ENCODE measurements at regions of chr1 and their contacts with region 1.

Region 1: DNA sequence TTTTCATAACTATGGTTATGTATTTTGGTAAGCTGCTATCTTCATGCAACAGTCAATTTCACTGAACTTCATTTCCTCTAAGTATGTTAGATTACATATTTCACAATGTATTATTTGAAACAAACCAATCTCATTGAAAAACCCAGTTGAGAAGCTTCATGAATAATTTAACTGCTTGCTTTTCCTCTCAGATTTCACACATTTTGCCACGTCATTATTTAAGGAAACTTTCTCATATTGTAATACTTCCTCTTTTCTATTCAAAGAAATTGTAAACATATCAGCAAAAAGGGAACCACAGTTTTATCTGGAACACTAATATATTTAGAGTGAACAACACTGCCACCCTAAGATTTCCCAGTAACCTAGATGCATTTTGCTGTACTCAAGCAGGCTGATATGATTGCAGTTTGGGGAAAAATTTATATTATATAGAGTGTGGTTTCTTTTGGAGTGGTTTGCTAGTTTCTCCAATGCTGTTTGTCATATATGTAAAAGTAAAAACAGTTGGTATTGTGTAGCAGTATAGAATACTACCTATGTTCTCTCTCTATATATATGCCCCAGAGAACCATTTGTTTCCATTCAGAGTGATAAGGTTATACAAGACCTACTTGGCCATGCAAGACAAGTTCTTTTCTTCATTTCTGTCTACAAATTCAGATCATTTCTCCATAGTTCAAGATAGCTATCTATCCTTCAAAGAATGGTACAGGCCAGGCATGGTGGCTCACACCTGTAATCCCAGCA is 28.4 kb upstream of the AHCTF1 start:
- H3K4me3 Mint-ChIP-seq: peak overlapping the region; percentile 70
- H3K27ac Mint-ChIP-seq: peak overlapping the region; percentile 94
- H3K4me1 Mint-ChIP-seq: peaks cover 43% of the 10 kb centered on the region
- H3K27me3 Mint-ChIP-seq: peaks cover 4% of the 10 kb centered on the region

Region 2: DNA sequence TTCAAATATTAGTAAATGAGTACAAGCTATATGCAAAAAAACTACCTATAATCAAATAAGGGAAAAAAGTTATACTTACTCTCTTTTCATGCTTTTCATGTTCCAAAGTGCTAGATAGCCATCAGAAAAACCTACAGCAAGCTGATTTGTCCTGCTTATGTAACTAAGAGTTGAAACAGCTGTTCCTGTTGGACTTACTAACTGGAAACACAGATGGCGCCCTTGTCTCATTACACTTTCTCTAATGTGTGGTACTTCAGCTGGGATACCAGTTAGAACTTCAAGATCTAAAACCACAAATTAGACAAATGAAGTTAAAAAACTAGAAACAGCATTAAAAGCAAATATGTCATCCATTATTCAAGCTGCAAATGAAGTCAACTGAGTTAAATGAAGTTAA is 52.6 kb before region 1 on chr1:
- intact Hi-C with region 1: no loop called
- H3K4me3 Mint-ChIP-seq: no peak overlapping the region
- H3K27ac Mint-ChIP-seq: no peak overlapping the region
- H3K4me1 Mint-ChIP-seq: peaks cover 6% of the 10 kb centered on the region
- H3K27me3 Mint-ChIP-seq: no peaks in the 10 kb centered on the region

Region 3: GRCh38 chr1:246931549-246932365 is 28.4 kb before region 1 on chr1 and contains the start of gene AHCTF1:
- intact Hi-C with region 1: loop called (anchors 1 kb)
- H3K4me3 Mint-ChIP-seq: peak within 1 kb of the TSS; percentile 97
- H3K27ac Mint-ChIP-seq: peak within 1 kb of the TSS; percentile 98
- H3K4me1 Mint-ChIP-seq: peaks cover 34% of the 10 kb centered on the region
- H3K27me3 Mint-ChIP-seq: no peaks in the 10 kb centered on the region

Measured in dendritic cell treated with granulocyte-macrophage colony-stimulating factor and Interleukin-4, amounts not matched to agents 40 ng/mL and 50 ng/mL, for 4 days (primary cell).